RWPE1 (cell line): ENCODE measurements at regions of chr6 and their contacts with region 1.

Region 1: GRCh38 chr6:46848684-46849360 is 55.6 kb downstream of the MEP1A start:
- DNase-seq: peak; percentile 67
- H3K27ac ChIP-seq: peak overlapping the region; percentile 18; the same call in 1 of the 2 replicates
- CTCF ChIP-seq: peak; percentile 94

Region 2: GRCh38 chr6:46989384-46989783 is 140.6 kb after region 1 on chr6:
- CTCF ChIA-PET with region 1: interaction called, 10 read pairs
- POLR2A ChIA-PET with region 1: no interaction called
- DNase-seq: no peak
- H3K27ac ChIP-seq: no peak overlapping the region
- CTCF ChIP-seq: no peak

Region 3: GRCh38 chr6:47047479-47048407 is 198.9 kb after region 1 on chr6:
- CTCF ChIA-PET with region 1: interaction called, 10 read pairs
- POLR2A ChIA-PET with region 1: no interaction called
- DNase-seq: peak; percentile 41
- H3K27ac ChIP-seq: no peak overlapping the region
- CTCF ChIP-seq: peak; percentile 85